ENCODE measurements at regions of chr5 and their contacts with region 1.

Region 1: GRCh38 chr5:150217873-150218692 is 28.2 kb downstream of the SLC6A7 start:
- DNase-seq: peak; percentile 89
- ATAC-seq: peak; percentile 97
- H3K4me3 Mint-ChIP-seq: no peak overlapping the region
- H3K27ac Mint-ChIP-seq: no peak overlapping the region
- H3K4me1 Mint-ChIP-seq: no peaks in the 10 kb centered on the region
- H3K27me3 Mint-ChIP-seq: peaks cover 3% of the 10 kb centered on the region

Region 2: GRCh38 chr5:149636851-149637246 is 581.2 kb before region 1 on chr5:
- CTCF ChIA-PET with region 1: no interaction called
- POLR2A ChIA-PET with region 1: no interaction called
- intact Hi-C with region 1: loop called in 1 of 2 experiments (anchors 2 kb)
- DNase-seq: peak; percentile 81
- ATAC-seq: peak; percentile 49
- H3K4me3 Mint-ChIP-seq: no peak overlapping the region
- H3K27ac Mint-ChIP-seq: no peak overlapping the region
- H3K4me1 Mint-ChIP-seq: peaks cover 13% of the 10 kb centered on the region
- H3K27me3 Mint-ChIP-seq: no peaks in the 10 kb centered on the region

Region 3: DNA sequence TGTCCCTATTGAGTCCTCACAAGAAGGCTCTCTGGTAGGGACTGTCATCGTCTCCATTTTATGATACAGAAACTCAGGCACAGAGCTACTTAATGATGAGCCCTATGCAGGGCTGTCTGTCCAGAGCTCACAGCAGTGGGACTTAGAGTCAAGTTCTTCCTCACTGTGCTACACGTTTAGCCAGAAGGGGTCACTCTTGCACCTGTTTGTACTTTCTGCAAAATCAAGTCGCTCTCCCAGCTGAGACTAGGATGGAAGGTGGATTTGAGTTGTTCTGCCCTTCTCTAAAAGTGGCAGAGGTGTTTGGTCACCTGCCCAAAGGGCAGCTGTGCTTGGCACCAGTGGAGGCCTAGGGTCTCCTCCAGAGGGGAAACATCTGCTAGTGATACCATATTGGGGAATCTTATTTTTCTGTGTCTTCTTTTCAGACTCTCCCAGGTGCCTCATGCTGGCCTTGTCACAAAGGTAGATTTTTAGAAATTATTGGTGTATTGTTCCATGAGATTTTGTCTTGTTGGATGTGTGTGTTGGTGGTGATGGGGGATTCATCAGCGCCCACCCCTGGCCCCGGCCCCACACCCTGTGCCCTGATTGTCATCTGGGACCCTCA is 383.7 kb before region 1 on chr5:
- CTCF ChIA-PET with region 1: interaction called, 3 read pairs
- POLR2A ChIA-PET with region 1: no interaction called
- intact Hi-C with region 1: loop called in 1 of 2 experiments (anchors 1 kb)
- DNase-seq: peak; percentile 74
- ATAC-seq: peak; percentile 55
- H3K4me3 Mint-ChIP-seq: no peak overlapping the region
- H3K27ac Mint-ChIP-seq: no peak overlapping the region
- H3K4me1 Mint-ChIP-seq: peaks cover 5% of the 10 kb centered on the region
- H3K27me3 Mint-ChIP-seq: no peaks in the 10 kb centered on the region

Region 4: GRCh38 chr5:150129813-150130492 is 88.1 kb before region 1 on chr5:
- CTCF ChIA-PET with region 1: interaction called, 3 read pairs
- POLR2A ChIA-PET with region 1: no interaction called
- intact Hi-C with region 1: loop called (anchors 1 kb)
- DNase-seq: peak; percentile 71
- ATAC-seq: peak; percentile 92
- H3K4me3 Mint-ChIP-seq: no peak overlapping the region
- H3K27ac Mint-ChIP-seq: no peak overlapping the region
- H3K4me1 Mint-ChIP-seq: no peaks in the 10 kb centered on the region
- H3K27me3 Mint-ChIP-seq: no peaks in the 10 kb centered on the region

Region 5: GRCh38 chr5:150161242-150162141 is 56.6 kb before region 1 on chr5:
- CTCF ChIA-PET with region 1: interaction called, 8 read pairs
- POLR2A ChIA-PET with region 1: no interaction called
- intact Hi-C with region 1: loop called (anchors 1 kb)
- DNase-seq: peak; percentile 88
- ATAC-seq: peak; percentile 91
- H3K4me3 Mint-ChIP-seq: no peak overlapping the region
- H3K27ac Mint-ChIP-seq: no peak overlapping the region
- H3K4me1 Mint-ChIP-seq: no peaks in the 10 kb centered on the region
- H3K27me3 Mint-ChIP-seq: peaks cover 8% of the 10 kb centered on the region